A549 (cell line): ENCODE measurements at regions of chr5 and their contacts with region 1.

Region 1: DNA sequence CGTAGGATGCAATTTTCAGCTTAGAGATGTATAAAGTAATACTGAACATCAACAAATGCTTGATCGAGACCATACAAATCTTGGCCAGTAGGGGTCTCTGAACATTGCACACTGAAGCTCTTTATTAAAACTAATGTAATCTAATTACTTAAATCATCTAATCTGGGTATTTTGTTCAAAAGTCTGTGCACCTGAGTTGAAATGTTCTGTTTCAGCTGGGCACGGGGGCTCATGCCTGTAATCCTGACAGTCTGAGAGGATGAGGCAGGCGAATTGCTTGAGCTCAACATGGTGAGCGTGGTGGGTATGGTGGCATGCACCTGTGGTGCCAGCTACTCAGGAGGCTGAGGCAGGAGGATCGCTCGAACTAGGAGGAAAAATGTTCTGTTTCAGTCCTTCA is 41.0 kb downstream of the ESM1 start:
- DNase-seq: peak; percentile 19 to 22
- ATAC-seq: peak; percentile 54 to 75; a peak in 3 of 6 replicates
- H3K4me3 ChIP-seq: no peak overlapping the region
- H3K27ac ChIP-seq: no peak overlapping the region
- H3K4me1 ChIP-seq: no peaks in the 10 kb centered on the region
- CTCF ChIP-seq: peak; percentile 65
- EP300 ChIP-seq: no peak
- POLR2A ChIP-seq: no peak
- RAD21 ChIP-seq: peak; percentile 40 to 41; a peak in 4 of 5 replicates

Region 2: GRCh38 chr5:54619731-54620547 is 324.4 kb before region 1 on chr5:
- CTCF ChIA-PET with region 1: no interaction called
- POLR2A ChIA-PET with region 1: no interaction called
- DNase-seq: no peak
- ATAC-seq: no peak
- H3K4me3 ChIP-seq: no peak overlapping the region
- H3K27ac ChIP-seq: no peak overlapping the region
- H3K4me1 ChIP-seq: no peaks in the 10 kb centered on the region
- CTCF ChIP-seq: no peak
- EP300 ChIP-seq: no peak
- POLR2A ChIP-seq: no peak
- RAD21 ChIP-seq: no peak

Region 3: GRCh38 chr5:54959673-54960418 is 15.5 kb after region 1 on chr5:
- CTCF ChIA-PET with region 1: interaction called, 22 read pairs
- POLR2A ChIA-PET with region 1: no interaction called
- DNase-seq: no peak
- ATAC-seq: no peak
- H3K4me3 ChIP-seq: no peak overlapping the region
- H3K27ac ChIP-seq: no peak overlapping the region
- H3K4me1 ChIP-seq: no peaks in the 10 kb centered on the region
- CTCF ChIP-seq: no peak
- EP300 ChIP-seq: no peak
- POLR2A ChIP-seq: no peak
- RAD21 ChIP-seq: no peak; a peak in 1 of 5 replicates